ENCODE measurements at regions of chr17 and their contacts with region 1.

Region 1: GRCh38 chr17:51147650-51148049 is 5.7 kb upstream of the NME1 start:
- DNase-seq: no peak
- ATAC-seq: no peak
- H3K4me3 ChIP-seq: no peak overlapping the region
- H3K27ac ChIP-seq: no peak overlapping the region
- H3K4me1 ChIP-seq: peaks cover 0 to 4% (median 0%) of the 10 kb centered on the region in 9 donors
- H3K27me3 ChIP-seq: no peaks in the 10 kb centered on the region
- CTCF ChIP-seq: no peak

Region 2: DNA sequence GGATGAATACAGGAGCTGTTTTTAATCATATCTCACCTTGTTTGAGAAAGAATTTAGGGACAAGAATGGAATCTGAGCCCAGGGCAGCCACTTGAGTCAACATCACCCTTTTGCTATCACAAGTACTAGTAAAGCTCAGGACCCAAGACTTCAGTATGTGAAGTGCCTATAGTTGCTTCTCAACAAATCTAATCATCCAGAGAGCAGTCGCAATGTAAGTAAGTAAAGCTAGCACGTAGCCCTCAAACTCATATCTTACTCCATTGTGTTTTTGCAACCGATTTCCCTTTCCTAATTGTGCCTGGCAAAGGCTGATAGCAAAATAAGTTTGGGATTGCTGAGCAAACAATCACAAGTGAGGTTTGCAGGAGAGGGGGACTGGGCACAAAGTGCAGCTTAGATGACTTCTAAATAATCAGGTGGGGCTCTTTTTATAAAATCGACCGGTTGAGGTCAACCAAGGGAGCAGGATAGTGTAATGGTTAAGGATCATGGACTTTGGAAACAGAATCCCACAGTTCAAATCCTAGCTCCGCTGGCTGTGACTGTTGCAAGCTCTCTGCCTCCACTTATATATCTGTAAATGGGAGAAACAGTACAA is 294.5 kb before region 1 on chr17:
- intact Hi-C with region 1: loop called in 2 of 10 experiments (anchors 10 kb)
- DNase-seq: no peak
- ATAC-seq: peak in 1 of 8 donors; percentile 2
- H3K4me3 ChIP-seq: peak overlapping the region in 1 of 10 donors; percentile 47
- H3K27ac ChIP-seq: peak overlapping the region in 8 of 10 donors; percentile 39 to 92 (median 82)
- H3K4me1 ChIP-seq: peaks cover 0 to 46% (median 18%) of the 10 kb centered on the region in 9 donors
- H3K27me3 ChIP-seq: no peaks in the 10 kb centered on the region
- CTCF ChIP-seq: no peak

Region 3: DNA sequence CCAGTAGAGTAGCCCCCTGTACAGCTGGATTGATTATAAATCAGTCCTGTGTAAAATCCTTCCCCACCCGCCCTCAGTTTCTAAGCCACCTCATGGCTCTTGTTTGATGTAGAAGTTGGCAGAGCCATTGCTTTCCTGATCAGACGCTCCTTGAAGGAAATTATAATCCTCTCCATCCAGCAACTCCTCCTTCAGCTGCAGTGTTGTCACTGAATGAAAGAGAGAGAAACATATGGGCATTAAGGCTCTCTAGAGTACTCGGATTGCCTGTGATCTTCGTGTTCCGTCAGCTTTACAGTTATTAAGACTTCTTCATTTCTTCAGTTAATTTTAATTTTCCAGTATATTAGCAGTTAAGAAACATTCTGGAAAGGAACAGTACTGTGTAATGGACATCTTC is 32.8 kb after region 1 on chr17:
- intact Hi-C with region 1: no loop called
- DNase-seq: no peak
- ATAC-seq: no peak
- H3K4me3 ChIP-seq: no peak overlapping the region
- H3K27ac ChIP-seq: no peak overlapping the region
- H3K4me1 ChIP-seq: no peaks in the 10 kb centered on the region
- H3K27me3 ChIP-seq: no peaks in the 10 kb centered on the region
- CTCF ChIP-seq: no peak